ENCODE measurements at regions of chr6 and their contacts with region 1.

Region 1: DNA sequence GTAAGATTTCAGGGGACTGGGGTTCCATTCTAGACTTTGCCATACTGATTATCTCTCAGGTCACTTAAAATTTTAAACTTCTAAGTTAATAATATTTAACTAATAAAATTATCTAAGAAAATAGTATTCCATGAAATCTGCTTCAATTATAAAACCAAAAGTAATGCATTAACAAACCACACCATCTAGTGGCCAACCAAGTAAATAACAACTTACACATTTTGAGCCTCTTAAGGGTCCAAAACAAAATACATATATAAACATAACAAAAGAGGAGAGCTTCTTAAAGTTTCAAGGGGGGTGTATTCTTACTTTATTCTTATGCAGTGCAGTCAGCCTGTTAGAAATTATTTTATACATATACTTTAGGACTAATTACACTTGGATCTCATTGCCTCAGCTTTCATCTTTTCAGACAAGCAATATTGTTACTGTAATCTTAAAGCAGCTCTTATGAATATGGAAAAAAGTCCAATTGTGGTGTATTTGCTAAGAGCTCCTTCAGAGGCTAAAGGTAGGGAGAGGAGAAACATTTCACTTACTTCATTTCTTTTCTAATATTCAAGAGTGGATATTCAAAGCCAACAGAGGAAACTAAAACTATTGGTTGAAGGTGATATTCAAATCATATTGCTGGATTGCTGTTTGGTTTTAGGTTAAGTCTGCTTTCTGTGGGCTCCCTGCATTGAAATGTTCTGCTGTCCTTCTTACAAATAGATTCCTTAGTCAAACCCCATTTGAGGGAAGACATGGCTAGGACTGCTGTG is 199.7 kb upstream of the SIM1 start:
- DNase-seq: no peak
- ATAC-seq: no peak
- H3K4me3 Mint-ChIP-seq: no peak overlapping the region
- H3K27ac Mint-ChIP-seq: no peak overlapping the region
- H3K4me1 Mint-ChIP-seq: peaks cover 5% of the 10 kb centered on the region
- H3K27me3 Mint-ChIP-seq: no peaks in the 10 kb centered on the region
- CTCF ChIP-seq: no peak

Region 2: DNA sequence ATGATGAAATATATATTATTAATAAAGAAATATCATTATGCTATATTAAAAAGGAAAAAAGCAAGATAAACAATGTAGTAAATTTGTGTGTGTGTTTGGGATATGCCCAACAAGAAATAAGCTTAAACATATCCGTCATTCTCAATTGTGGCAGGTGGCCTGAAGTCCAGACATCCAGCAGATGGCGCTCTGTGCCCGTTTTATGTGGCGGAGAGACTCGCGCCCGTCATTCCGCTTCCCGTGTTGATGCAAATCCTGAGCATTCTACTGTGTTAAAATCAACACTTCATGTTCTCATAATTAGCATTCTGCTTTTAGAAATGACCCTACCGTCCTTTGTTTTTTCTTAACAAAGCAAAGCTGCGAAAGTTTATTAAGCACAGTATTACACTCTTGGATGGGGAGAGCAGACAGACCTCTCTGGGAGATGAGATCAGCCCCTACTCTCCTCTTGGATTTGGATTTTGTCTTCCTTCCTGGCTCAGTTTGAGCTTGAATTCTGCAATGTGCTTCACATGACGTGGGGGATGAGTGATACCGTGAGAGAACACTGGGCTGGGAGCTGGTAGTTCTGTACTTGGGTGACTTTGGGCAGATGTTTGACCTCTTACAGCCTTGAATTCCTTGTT is 796.3 kb before region 1 on chr6:
- CTCF ChIA-PET with region 1: interaction called, 4 read pairs
- POLR2A ChIA-PET with region 1: no interaction called
- intact Hi-C with region 1: loop called (anchors 1 kb)
- DNase-seq: peak; percentile 33
- ATAC-seq: no peak
- H3K4me3 Mint-ChIP-seq: no peak overlapping the region
- H3K27ac Mint-ChIP-seq: no peak overlapping the region
- H3K4me1 Mint-ChIP-seq: peaks cover 2% of the 10 kb centered on the region
- H3K27me3 Mint-ChIP-seq: peaks cover 23% of the 10 kb centered on the region
- CTCF ChIP-seq: no peak

Region 3: GRCh38 chr6:100001915-100002388 is 662.5 kb before region 1 on chr6:
- CTCF ChIA-PET with region 1: interaction called, 7 read pairs
- POLR2A ChIA-PET with region 1: no interaction called
- intact Hi-C with region 1: loop called (anchors 2 kb)
- DNase-seq: no peak
- ATAC-seq: peak; percentile 69
- H3K4me3 Mint-ChIP-seq: no peak overlapping the region
- H3K27ac Mint-ChIP-seq: no peak overlapping the region
- H3K4me1 Mint-ChIP-seq: no peaks in the 10 kb centered on the region
- H3K27me3 Mint-ChIP-seq: peaks cover 16% of the 10 kb centered on the region
- CTCF ChIP-seq: peak; percentile 67